ENCODE measurements at regions of chr20 and their contacts with region 1.

Region 1: DNA sequence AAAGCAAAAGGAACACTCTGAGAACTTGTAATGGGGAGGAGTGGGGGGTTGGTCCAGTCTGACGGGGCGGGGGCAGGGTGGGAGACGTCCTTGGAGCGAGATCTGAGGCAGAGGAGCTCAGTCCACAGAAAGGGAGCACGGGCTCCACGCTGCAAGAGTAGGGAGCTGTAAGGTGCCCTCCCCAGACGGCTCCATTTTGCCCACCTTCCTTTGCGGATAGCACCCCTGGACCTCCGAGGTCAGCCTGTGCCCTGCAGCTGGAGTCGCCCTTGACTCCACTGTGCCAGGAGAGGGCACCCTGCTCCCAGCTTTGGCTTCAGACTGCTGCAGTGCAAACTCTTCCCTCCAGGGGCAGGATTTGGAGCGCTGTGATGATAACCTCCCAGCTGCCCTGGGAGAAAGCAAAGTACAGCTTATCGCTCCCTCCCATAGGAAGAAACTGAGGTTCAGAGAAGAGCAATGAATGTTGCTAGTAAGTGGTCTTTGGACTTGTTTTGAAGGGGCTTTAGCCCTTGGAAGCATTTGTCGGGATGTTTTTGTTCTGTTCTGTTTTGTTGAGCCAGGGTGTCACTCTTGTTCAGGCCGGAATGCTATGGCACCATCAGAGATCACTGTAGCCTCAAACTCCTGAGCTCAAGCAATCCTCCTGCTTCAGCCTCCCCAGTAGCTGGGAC is 9.5 kb upstream of the AHCY start:
- DNase-seq: peak; percentile 84 to 86 (median 84)
- H3K4me3 ChIP-seq: no peak overlapping the region
- H3K4me3 Mint-ChIP-seq: peak overlapping the region in 3 of 8 donors; percentile 41 to 58 (median 55)
- H3K27ac ChIP-seq: no peak overlapping the region
- H3K27ac Mint-ChIP-seq: peak overlapping the region in 2 of 7 donors; percentile 64 to 70
- H3K4me1 ChIP-seq: peaks cover 9% of the 10 kb centered on the region
- H3K4me1 Mint-ChIP-seq: peaks cover 5 to 14% (median 10%) of the 10 kb centered on the region in 4 donors
- H3K27me3 ChIP-seq: peaks cover 12% of the 10 kb centered on the region
- H3K27me3 Mint-ChIP-seq: peaks cover 16 to 23% of the 10 kb centered on the region in 2 donors

Region 2: GRCh38 chr20:34324541-34324940 is 11.9 kb after region 1 on chr20:
- CTCF ChIA-PET with region 1: interaction called, 20 read pairs
- POLR2A ChIA-PET with region 1: no interaction called
- intact Hi-C with region 1: no loop called
- DNase-seq: no peak
- H3K4me3 ChIP-seq: no peak overlapping the region
- H3K4me3 Mint-ChIP-seq: peak overlapping the region in 1 of 8 donors; percentile 3
- H3K27ac ChIP-seq: no peak overlapping the region
- H3K27ac Mint-ChIP-seq: no peak overlapping the region
- H3K4me1 ChIP-seq: no peaks in the 10 kb centered on the region
- H3K4me1 Mint-ChIP-seq: peaks cover 0 to 2% (median 0%) of the 10 kb centered on the region in 4 donors
- H3K27me3 ChIP-seq: no peaks in the 10 kb centered on the region
- H3K27me3 Mint-ChIP-seq: peaks cover 5 to 10% of the 10 kb centered on the region in 2 donors

Region 3: DNA sequence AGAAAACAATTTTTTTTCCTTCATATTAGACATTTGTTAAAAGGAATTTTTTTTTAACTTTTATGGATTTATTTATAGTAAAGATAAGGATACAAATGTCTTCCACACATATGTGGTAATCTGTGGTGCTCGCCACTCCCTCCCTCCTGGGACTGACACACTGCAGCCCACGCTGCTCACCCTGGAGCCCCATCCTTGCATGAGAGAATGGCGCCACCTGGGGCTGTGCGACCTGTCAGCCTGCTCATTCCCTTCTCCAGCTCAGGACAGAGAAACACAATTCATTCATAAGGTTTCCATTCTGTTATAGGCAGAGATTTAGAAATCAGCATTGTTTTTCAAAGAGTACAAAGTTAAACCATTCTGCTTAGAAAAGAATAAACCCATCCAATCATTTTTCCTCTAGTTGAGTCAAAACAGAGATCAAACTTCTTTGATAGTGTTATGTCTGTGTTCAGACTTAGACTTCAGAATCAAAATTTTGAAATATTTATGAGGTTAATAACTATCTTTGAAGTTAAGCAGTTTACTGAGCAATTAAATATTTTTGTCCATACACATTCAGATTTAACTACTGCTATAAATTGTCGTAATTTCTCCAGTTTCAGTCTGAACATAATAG is 160.7 kb after region 1 on chr20:
- CTCF ChIA-PET with region 1: interaction called, 8 read pairs
- POLR2A ChIA-PET with region 1: no interaction called
- intact Hi-C with region 1: loop called (anchors 5 kb)
- DNase-seq: peak in 3 of 5 donors; percentile 5 to 12 (median 6)
- H3K4me3 ChIP-seq: no peak overlapping the region
- H3K4me3 Mint-ChIP-seq: no peak overlapping the region
- H3K27ac ChIP-seq: no peak overlapping the region
- H3K27ac Mint-ChIP-seq: no peak overlapping the region
- H3K4me1 ChIP-seq: no peaks in the 10 kb centered on the region
- H3K4me1 Mint-ChIP-seq: peaks cover 0 to 8% (median 5%) of the 10 kb centered on the region in 4 donors
- H3K27me3 ChIP-seq: no peaks in the 10 kb centered on the region
- H3K27me3 Mint-ChIP-seq: no peaks in the 10 kb centered on the region

Region 4: GRCh38 chr20:34522969-34523871 is 210.5 kb after region 1 on chr20:
- CTCF ChIA-PET with region 1: interaction called, 48 read pairs
- POLR2A ChIA-PET with region 1: no interaction called
- intact Hi-C with region 1: loop called (anchors 1 kb)
- DNase-seq: peak in 4 of 5 donors; percentile 31 to 40 (median 33)
- H3K4me3 ChIP-seq: no peak overlapping the region
- H3K4me3 Mint-ChIP-seq: peak overlapping the region in 2 of 8 donors; percentile 7 to 55
- H3K27ac ChIP-seq: no peak overlapping the region
- H3K27ac Mint-ChIP-seq: peak overlapping the region in 6 of 7 donors; percentile 29 to 77 (median 66)
- H3K4me1 ChIP-seq: peaks cover 41% of the 10 kb centered on the region
- H3K4me1 Mint-ChIP-seq: peaks cover 34 to 65% (median 47%) of the 10 kb centered on the region in 4 donors
- H3K27me3 ChIP-seq: no peaks in the 10 kb centered on the region
- H3K27me3 Mint-ChIP-seq: no peaks in the 10 kb centered on the region

Region 5: DNA sequence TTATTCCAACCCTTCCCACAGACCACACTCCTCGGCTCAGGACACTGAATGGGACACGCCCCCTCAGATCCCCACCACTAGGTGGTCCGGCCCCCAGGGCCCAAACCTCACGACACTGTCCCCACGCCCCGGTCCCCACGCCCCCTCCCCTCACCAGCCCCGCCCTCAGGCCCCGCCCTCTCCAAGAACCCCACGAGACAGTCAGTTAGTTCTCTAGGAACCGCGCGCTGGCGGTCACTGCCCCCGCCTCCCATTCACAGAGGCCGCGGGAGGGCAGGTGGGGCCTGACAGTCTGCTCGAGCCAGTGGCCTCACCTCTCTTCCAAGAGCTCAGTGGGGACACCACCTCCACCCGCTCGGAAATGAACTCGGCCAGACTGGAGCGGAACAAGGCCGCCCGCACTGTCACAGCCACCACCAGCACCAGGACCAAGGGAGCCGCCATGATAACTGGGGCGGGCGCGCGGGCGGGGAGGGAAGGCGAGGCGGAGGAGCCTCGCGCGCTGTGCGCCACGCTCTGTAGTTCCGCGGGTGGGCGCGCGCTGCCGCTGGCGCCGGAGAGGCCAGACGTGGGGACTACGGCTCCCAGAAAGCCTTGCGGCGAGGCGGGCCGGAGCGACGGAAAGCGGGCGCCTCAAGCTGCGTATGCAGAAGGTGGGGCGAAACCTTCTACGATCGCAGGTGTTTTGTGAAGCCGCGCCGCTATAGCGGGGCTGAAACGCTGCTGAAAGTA is 364.1 kb after region 1 on chr20 and contains the start of gene PIGU:
- CTCF ChIA-PET with region 1: interaction called, 3 read pairs
- POLR2A ChIA-PET with region 1: no interaction called
- intact Hi-C with region 1: loop called (anchors 5 kb)
- DNase-seq: peak; percentile 94 to 96 (median 96)
- H3K4me3 ChIP-seq: peak within 1 kb of the TSS; percentile 57 to 67
- H3K4me3 Mint-ChIP-seq: peak within 1 kb of the TSS; percentile 95 to 99 (median 97)
- H3K27ac ChIP-seq: peak within 1 kb of the TSS; percentile 66
- H3K27ac Mint-ChIP-seq: peak within 1 kb of the TSS; percentile 93 to 98 (median 97)
- H3K4me1 ChIP-seq: peaks cover 19% of the 10 kb centered on the region
- H3K4me1 Mint-ChIP-seq: peaks cover 11 to 25% (median 19%) of the 10 kb centered on the region in 4 donors
- H3K27me3 ChIP-seq: no peaks in the 10 kb centered on the region
- H3K27me3 Mint-ChIP-seq: no peaks in the 10 kb centered on the region
- total RNA-seq, gene PIGU: 15.1 to 18.2 TPM

Region 6: GRCh38 chr20:34753706-34754461 is 441.2 kb after region 1 on chr20:
- CTCF ChIA-PET with region 1: interaction called, 11 read pairs
- POLR2A ChIA-PET with region 1: no interaction called
- intact Hi-C with region 1: no loop called
- DNase-seq: no peak
- H3K4me3 ChIP-seq: no peak overlapping the region
- H3K4me3 Mint-ChIP-seq: no peak overlapping the region
- H3K27ac ChIP-seq: no peak overlapping the region
- H3K27ac Mint-ChIP-seq: no peak overlapping the region
- H3K4me1 ChIP-seq: no peaks in the 10 kb centered on the region
- H3K4me1 Mint-ChIP-seq: peaks cover 0 to 2% (median 0%) of the 10 kb centered on the region in 4 donors
- H3K27me3 ChIP-seq: no peaks in the 10 kb centered on the region
- H3K27me3 Mint-ChIP-seq: no peaks in the 10 kb centered on the region

Measured in CD4-positive, alpha-beta memory T cell (primary cell).